ENCODE measurements at regions of chr3 and their contacts with region 1.

Region 1: DNA sequence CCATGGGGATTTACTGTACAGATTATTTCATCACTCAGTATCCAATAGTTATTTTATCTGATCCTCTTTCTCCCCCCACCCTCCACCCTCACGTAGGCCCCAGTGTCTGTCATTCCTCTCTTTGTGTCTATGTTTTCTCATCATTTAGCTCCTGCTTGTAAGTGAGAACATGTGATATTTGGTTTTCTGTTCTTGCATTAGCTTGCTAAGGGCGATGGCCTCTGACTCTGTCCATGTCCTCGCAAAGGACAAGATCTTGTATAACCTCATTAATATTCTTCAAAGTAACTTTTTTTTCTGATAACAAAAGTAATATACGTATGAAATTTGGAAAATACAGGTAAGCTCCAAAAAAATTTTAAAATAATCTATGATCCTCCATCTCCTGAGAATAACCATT is 67.4 kb downstream of the MAP3K13 start:
- DNase-seq: no peak
- H3K4me3 ChIP-seq: no peak overlapping the region
- H3K27ac ChIP-seq: no peak overlapping the region
- H3K4me1 ChIP-seq: no peaks in the 10 kb centered on the region
- H3K27me3 ChIP-seq: no peaks in the 10 kb centered on the region
- CTCF ChIP-seq: no peak

Region 2: GRCh38 chr3:185070491-185071286 is 359.7 kb before region 1 on chr3:
- CTCF ChIA-PET with region 1: no interaction called
- POLR2A ChIA-PET with region 1: no interaction called
- intact Hi-C with region 1: no loop called
- DNase-seq: peak in 1 of 2 experiments; percentile 15
- H3K4me3 ChIP-seq: no peak overlapping the region
- H3K27ac ChIP-seq: no peak overlapping the region
- H3K4me1 ChIP-seq: no peaks in the 10 kb centered on the region
- H3K27me3 ChIP-seq: peaks cover 41% of the 10 kb centered on the region
- CTCF ChIP-seq: peak; percentile 39; the same call in 1 of the 2 replicates

Region 3: DNA sequence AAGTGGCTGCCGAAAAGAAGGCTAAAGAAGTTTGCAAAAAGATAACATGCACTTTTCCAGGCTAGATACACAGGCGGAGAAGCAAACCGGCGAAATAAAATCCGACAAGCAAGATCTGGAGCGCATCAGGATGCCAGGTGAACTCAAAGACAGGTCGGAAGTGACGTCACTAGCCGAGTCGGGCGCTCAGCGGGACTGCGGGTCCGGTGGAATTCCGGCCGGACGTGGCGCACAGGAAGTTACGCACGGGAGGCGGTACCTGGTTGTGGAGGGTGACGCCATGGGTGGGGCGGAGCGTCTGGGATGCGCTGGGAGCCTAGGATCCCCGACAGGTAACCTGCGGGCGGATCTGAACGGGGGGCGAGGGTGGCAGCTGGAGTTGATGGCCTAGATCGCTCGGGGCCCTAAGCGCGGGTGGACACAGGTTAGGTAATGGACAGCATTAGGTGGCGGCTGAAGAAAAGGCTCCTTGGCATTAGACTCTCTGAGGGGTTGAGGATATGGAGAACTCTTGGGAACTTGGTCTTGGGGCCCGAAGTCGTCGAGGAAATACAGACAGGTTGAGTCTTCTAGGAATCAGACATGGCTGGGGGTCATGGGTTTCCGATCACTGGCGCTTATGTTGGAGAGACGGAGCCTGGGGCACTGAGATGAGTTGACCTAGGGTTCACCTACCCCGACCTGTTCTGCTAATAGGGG is 147.5 kb before region 1 on chr3:
- CTCF ChIA-PET with region 1: no interaction called
- POLR2A ChIA-PET with region 1: no interaction called
- intact Hi-C with region 1: no loop called
- DNase-seq: peak; percentile 96 to 98
- H3K4me3 ChIP-seq: peak overlapping the region; percentile 95
- H3K27ac ChIP-seq: peak overlapping the region; percentile 55
- H3K4me1 ChIP-seq: peaks cover 8% of the 10 kb centered on the region
- H3K27me3 ChIP-seq: no peaks in the 10 kb centered on the region
- CTCF ChIP-seq: no peak

Region 4: GRCh38 chr3:185308126-185308754 is 122.1 kb before region 1 on chr3:
- CTCF ChIA-PET with region 1: interaction called, 4 read pairs
- POLR2A ChIA-PET with region 1: no interaction called
- intact Hi-C with region 1: loop called (anchors 5 kb)
- DNase-seq: peak; percentile 69 to 74
- H3K4me3 ChIP-seq: no peak overlapping the region
- H3K27ac ChIP-seq: no peak overlapping the region
- H3K4me1 ChIP-seq: no peaks in the 10 kb centered on the region
- H3K27me3 ChIP-seq: no peaks in the 10 kb centered on the region
- CTCF ChIP-seq: peak; percentile 94

Region 5: DNA sequence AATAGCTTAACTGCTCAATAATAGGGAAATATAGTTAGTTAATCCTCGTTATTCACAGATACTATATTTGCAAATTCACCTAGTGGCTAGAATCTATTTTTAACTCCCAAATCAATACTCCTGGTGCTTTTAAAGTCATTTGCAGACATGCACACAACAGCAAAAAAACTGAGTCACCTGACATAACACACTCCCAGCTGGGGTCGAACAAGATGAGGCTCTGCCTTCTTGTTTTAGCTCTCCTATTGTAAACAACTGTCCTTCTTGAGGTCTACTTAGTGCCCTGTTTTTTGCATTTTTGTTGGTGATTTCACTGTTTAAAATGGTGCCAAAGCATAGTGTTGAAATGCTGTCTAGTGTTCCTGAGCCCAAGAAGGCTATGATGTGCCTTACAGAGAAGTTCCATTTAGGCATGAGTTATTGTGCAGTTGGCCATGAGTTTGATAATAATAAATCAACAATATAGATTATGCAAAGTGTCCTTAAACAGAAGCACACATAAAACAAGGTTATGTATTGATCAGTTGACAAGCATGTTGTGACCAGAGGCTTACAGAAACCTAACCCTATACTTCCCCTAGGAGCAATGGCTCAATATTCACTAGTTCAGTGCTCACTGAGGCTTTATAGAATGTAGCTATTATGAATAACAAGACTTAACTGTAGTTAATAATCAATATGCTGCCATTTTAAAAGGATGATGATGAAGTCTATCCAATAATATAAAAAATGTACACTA is 48.9 kb before region 1 on chr3:
- CTCF ChIA-PET with region 1: no interaction called
- POLR2A ChIA-PET with region 1: interaction called, 18 read pairs
- intact Hi-C with region 1: no loop called
- DNase-seq: no peak
- H3K4me3 ChIP-seq: no peak overlapping the region
- H3K27ac ChIP-seq: no peak overlapping the region
- H3K4me1 ChIP-seq: no peaks in the 10 kb centered on the region
- H3K27me3 ChIP-seq: no peaks in the 10 kb centered on the region
- CTCF ChIP-seq: no peak